Heart right ventricle (tissue), 16 donors: ENCODE measurements at regions of chr4 and their contacts with region 1.

Region 1: GRCh38 chr4:102439236-102439614 is 61.9 kb upstream of the NFKB1 start:
- DNase-seq: peak in 1 of 2 donors; percentile 46
- ATAC-seq: peak in 7 of 8 donors; percentile 75 to 88 (median 82)
- H3K4me3 ChIP-seq: no peak overlapping the region
- H3K27ac ChIP-seq: peak overlapping the region in 7 of 10 donors; percentile 16 to 73 (median 56)
- H3K4me1 ChIP-seq: peaks cover 0 to 19% (median 18%) of the 10 kb centered on the region in 9 donors
- H3K27me3 ChIP-seq: no peaks in the 10 kb centered on the region
- CTCF ChIP-seq: no peak

Region 2: GRCh38 chr4:102299354-102300107 is 139.7 kb before region 1 on chr4:
- intact Hi-C with region 1: no loop called
- DNase-seq: peak in 1 of 2 donors; percentile 6
- ATAC-seq: peak in 7 of 8 donors; percentile 51 to 81 (median 61)
- H3K4me3 ChIP-seq: no peak overlapping the region
- H3K27ac ChIP-seq: no peak overlapping the region
- H3K4me1 ChIP-seq: peaks cover 0 to 16% (median 0%) of the 10 kb centered on the region in 9 donors
- H3K27me3 ChIP-seq: no peaks in the 10 kb centered on the region
- CTCF ChIP-seq: peak in 7 of 9 donors; percentile 57 to 68 (median 62)

Region 3: GRCh38 chr4:102404431-102405028 is 34.7 kb before region 1 on chr4:
- intact Hi-C with region 1: no loop called
- DNase-seq: no peak
- ATAC-seq: no peak
- H3K4me3 ChIP-seq: no peak overlapping the region
- H3K27ac ChIP-seq: peak overlapping the region in 1 of 10 donors; percentile 45
- H3K4me1 ChIP-seq: peaks cover 0 to 19% (median 0%) of the 10 kb centered on the region in 9 donors
- H3K27me3 ChIP-seq: no peaks in the 10 kb centered on the region
- CTCF ChIP-seq: no peak

Region 4: GRCh38 chr4:103019308-103020124 is 580.3 kb after region 1 on chr4 and contains the start of gene SLC9B1:
- intact Hi-C with region 1: loop called in 2 of 10 experiments (anchors 5 to 10 kb)
- DNase-seq: peak; percentile 94 to 95
- ATAC-seq: peak; percentile 99 to 100 (median 100)
- H3K4me3 ChIP-seq: peak within 1 kb of the TSS; percentile 36 to 64 (median 56)
- H3K27ac ChIP-seq: peak within 1 kb of the TSS; percentile 67 to 92 (median 90)
- H3K4me1 ChIP-seq: peaks cover 0 to 15% (median 7%) of the 10 kb centered on the region in 9 donors
- H3K27me3 ChIP-seq: no peaks in the 10 kb centered on the region
- CTCF ChIP-seq: no peak
- total RNA-seq, gene SLC9B1: 0.19 to 1.4 (median 0.67) TPM in 7 of 10 donors, not detected in the others